ENCODE measurements at regions of chr1 and their contacts with region 1.

Region 1: DNA sequence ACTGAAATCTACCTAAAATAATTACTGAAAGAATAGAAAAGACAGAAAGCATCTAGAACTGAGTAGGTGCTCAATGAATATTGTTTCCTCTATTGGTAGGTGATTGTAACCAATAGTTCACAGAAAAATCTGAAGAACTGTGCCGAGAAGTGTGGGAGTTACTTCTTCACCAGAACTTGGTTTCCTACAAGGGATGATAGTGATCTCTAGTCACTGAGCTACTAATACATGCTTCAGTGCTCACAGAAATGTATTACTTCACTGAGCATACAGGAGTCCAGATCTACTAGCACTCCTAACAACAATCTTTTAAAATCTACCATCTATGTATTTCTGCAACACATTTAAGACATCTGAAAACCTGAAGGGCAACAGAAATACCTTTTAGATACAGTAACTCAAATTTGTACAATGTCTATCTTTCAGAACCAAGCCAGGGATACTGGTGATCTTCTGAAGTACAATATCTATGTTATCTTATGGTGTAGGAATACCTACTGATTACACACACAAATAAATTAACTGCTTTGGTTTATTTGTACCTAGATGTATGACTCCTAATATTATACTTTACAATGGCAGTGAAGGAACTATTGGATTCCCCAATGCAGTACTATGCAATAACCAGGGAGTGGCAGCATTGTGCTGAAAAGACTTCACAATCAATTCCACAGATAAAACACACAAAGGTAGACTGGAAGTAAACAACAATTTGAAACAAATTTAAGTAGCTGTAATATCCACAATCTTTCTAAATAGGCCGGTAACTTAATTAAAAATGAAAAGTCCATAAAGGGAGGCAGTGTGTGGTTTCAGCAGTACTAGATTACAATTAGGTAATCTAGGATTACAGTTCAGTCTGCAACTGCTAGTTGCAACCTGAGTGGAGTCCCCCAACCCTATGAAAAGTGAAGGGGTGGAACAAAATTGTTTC is 243.0 kb downstream of the SLC45A1 start:
- DNase-seq: peak; percentile 38
- H3K4me3 ChIP-seq: no peak overlapping the region
- H3K27ac ChIP-seq: no peak overlapping the region
- H3K4me1 ChIP-seq: no peaks in the 10 kb centered on the region
- H3K27me3 ChIP-seq: no peaks in the 10 kb centered on the region
- CTCF ChIP-seq: peak; percentile 97

Region 2: GRCh38 chr1:8598060-8598724 is 37.3 kb after region 1 on chr1:
- intact Hi-C with region 1: no loop called
- DNase-seq: peak; percentile 48
- H3K4me3 ChIP-seq: no peak overlapping the region
- H3K27ac ChIP-seq: peak overlapping the region; percentile 50
- H3K4me1 ChIP-seq: no peaks in the 10 kb centered on the region
- H3K27me3 ChIP-seq: no peaks in the 10 kb centered on the region
- CTCF ChIP-seq: peak; percentile 30

Region 3: GRCh38 chr1:8671306-8671917 is 110.5 kb after region 1 on chr1:
- intact Hi-C with region 1: loop called (anchors 2 kb)
- DNase-seq: peak; percentile 51
- H3K4me3 ChIP-seq: no peak overlapping the region
- H3K27ac ChIP-seq: no peak overlapping the region
- H3K4me1 ChIP-seq: peaks cover 9% of the 10 kb centered on the region
- H3K27me3 ChIP-seq: no peaks in the 10 kb centered on the region
- CTCF ChIP-seq: peak; percentile 77

Region 4: DNA sequence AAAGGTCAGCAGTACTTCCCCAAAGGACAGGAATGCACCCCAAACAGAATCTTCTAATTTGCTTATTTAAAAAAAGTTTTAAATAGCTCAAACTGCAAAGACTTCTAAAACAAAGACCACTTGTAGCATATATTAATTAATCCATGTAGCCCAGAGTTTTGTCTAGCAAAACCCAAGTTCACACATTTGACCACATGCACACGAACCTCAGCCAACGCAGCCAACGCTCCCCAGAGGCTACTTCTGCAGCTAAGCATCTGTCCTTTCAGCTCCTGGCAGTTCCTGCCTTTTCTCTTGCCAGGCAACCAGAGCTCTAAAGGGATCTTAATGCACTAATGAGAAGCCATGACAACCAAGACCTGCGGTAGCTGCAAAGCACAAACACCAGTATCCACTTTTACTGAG is 166.9 kb after region 1 on chr1:
- intact Hi-C with region 1: loop called (anchors 2 kb)
- DNase-seq: no peak
- H3K4me3 ChIP-seq: no peak overlapping the region
- H3K27ac ChIP-seq: no peak overlapping the region
- H3K4me1 ChIP-seq: no peaks in the 10 kb centered on the region
- H3K27me3 ChIP-seq: no peaks in the 10 kb centered on the region
- CTCF ChIP-seq: no peak

Region 5: GRCh38 chr1:8848663-8849386 is 287.9 kb after region 1 on chr1:
- intact Hi-C with region 1: loop called (anchors 2 kb)
- DNase-seq: peak; percentile 93
- H3K4me3 ChIP-seq: no peak overlapping the region
- H3K27ac ChIP-seq: no peak overlapping the region
- H3K4me1 ChIP-seq: no peaks in the 10 kb centered on the region
- H3K27me3 ChIP-seq: no peaks in the 10 kb centered on the region
- CTCF ChIP-seq: peak; percentile 94

Region 6: DNA sequence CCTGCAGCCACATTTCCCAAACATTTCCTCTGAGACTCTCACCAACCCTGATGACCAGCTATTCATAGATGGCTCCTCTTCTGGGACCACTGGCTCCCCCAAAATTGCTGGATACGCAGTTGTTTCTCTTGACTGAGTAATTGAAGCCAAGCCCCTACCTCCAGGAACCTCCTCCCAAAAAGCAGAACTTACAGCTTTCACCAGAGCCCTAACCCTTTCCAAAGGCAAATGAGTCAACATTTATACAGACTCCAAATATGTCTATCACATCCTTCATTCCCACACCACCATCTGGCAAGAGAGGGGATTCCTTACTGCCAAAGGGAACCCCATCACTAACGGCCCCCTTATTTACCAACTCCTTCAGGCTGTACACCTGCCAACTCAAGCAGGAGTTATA is 364.5 kb after region 1 on chr1:
- intact Hi-C with region 1: no loop called
- DNase-seq: no peak
- H3K4me3 ChIP-seq: no peak overlapping the region
- H3K27ac ChIP-seq: no peak overlapping the region
- H3K4me1 ChIP-seq: no peaks in the 10 kb centered on the region
- H3K27me3 ChIP-seq: no peaks in the 10 kb centered on the region
- CTCF ChIP-seq: no peak